ENCODE measurements at regions of chr1 and their contacts with region 1.

Region 1: GRCh38 chr1:160018900-160019299 is 12.9 kb downstream of the PIGM start:
- DNase-seq: peak; percentile 67
- H3K4me3 Mint-ChIP-seq: no peak overlapping the region
- H3K27ac Mint-ChIP-seq: no peak overlapping the region
- H3K4me1 Mint-ChIP-seq: peaks cover 27% of the 10 kb centered on the region
- H3K27me3 Mint-ChIP-seq: no peaks in the 10 kb centered on the region
- CTCF ChIP-seq: no peak

Region 2: DNA sequence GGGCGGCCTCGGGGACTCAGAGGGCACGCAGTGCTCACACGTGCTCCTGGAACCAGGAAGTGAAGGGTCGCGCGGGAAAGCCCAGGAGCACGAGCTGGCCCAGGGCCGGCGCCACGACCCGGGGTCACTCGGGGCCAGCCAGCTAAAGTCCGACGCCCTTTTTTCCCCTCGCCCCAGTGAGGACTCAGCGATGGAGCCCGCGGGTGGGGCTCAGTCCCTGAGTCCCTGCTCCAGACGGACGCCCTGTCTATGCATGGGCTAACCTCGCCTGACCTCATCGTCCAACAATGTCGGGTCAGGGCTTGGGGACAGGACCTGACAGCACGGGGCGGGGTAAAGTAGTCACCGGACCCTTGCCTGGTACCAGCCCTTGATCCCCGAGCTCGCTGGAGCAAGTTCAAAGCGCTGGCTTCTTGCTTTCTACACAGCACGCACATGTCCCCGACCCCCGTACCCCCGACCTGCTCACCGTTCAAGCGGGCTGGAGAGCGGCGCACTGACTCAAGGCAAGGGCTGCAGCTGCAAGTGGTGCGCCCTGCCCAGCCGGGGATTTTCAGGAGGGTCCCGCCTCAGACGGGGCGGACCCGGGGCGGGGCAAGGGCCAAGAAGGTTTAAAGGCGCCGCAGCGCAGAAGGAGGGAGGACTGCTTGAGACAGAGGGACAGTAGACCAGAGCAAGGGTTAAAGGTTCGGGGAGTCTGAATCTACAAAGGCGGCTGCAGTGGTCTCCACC is 93.8 kb before region 1 on chr1 and contains the start of gene TAGLN2:
- CTCF ChIA-PET with region 1: interaction called, 5 read pairs
- POLR2A ChIA-PET with region 1: interaction called, 10 read pairs
- intact Hi-C with region 1: no loop called
- DNase-seq: peak; percentile 97
- H3K4me3 Mint-ChIP-seq: peak within 1 kb of the TSS; percentile 81
- H3K27ac Mint-ChIP-seq: peak within 1 kb of the TSS; percentile 99
- H3K4me1 Mint-ChIP-seq: peaks cover 44% of the 10 kb centered on the region
- H3K27me3 Mint-ChIP-seq: no peaks in the 10 kb centered on the region
- CTCF ChIP-seq: no peak
- total RNA-seq, gene TAGLN2: 464 and 483 TPM in 2 replicates

Region 3: GRCh38 chr1:160093624-160094290 is 74.9 kb after region 1 on chr1:
- CTCF ChIA-PET with region 1: no interaction called
- POLR2A ChIA-PET with region 1: no interaction called
- intact Hi-C with region 1: no loop called
- DNase-seq: no peak
- H3K4me3 Mint-ChIP-seq: no peak overlapping the region
- H3K27ac Mint-ChIP-seq: no peak overlapping the region
- H3K4me1 Mint-ChIP-seq: peaks cover 23% of the 10 kb centered on the region
- H3K27me3 Mint-ChIP-seq: no peaks in the 10 kb centered on the region
- CTCF ChIP-seq: no peak

Region 4: GRCh38 chr1:160428655-160429054 is 409.8 kb after region 1 on chr1:
- CTCF ChIA-PET with region 1: no interaction called
- POLR2A ChIA-PET with region 1: no interaction called
- intact Hi-C with region 1: no loop called
- DNase-seq: peak; percentile 70
- H3K4me3 Mint-ChIP-seq: no peak overlapping the region
- H3K27ac Mint-ChIP-seq: no peak overlapping the region
- H3K4me1 Mint-ChIP-seq: no peaks in the 10 kb centered on the region
- H3K27me3 Mint-ChIP-seq: peaks cover 8% of the 10 kb centered on the region
- CTCF ChIP-seq: peak; percentile 93

Measured in MCF 10A (cell line).